WTC11 (cell line): ENCODE measurements at regions of chr2 and their contacts with region 1.

Region 1: DNA sequence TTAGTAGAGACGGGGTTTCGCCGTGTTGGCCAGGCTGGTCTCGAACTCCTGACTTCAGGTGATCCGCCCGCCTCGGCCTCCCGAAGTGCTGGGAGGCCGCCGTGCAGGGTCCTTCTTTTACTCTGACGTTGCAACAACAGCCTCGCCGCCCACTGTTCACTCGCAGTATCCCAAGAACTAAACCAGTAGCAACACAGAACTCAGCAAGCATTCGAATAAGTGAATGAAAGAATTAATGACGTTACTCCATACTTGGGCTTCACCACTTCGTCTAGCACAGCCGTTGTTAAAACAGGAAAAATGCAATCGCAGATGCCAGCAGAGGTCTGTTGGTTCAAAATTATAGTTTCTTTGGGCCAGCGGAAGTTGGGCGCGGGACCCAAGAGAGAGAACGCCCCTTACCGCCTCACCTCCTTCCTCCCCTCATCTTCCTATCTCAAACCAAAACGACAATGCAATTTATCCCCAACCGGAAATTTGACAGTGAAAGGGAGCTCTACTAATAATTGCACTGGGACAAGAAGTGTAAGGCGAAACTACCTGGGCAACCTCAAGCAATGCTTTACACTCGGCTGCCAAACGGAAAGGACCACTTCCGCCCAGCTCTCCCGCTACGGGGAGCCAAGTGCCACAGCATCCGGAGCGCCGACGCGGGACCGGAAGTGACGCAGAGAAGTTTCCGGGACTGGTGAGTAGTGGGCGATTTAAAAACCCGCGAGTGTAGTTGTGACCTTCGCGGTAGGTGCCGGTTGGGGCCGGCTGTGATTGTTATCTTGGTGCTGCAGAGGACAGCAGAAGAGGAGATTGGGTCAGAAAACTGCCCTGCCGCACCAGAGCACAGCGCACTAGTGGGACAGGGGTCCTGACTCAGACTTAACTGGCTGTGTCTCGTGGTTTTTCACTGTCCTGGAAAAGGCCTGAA is at the starts of genes NIF3L1 and PPIL3:
- DNase-seq: peak; percentile 97
- ATAC-seq: peak; percentile 91
- H3K4me3 Mint-ChIP-seq: peak within 1 kb of the TSS; percentile 97
- H3K27ac Mint-ChIP-seq: peak within 1 kb of the TSS; percentile 100
- H3K4me1 Mint-ChIP-seq: peaks cover 20% of the 10 kb centered on the region
- H3K27me3 Mint-ChIP-seq: no peaks in the 10 kb centered on the region
- CTCF ChIP-seq: no peak
- total RNA-seq, gene NIF3L1: 49.1 to 51.2 TPM (median 50.6 TPM) in 3 replicates
- total RNA-seq, gene PPIL3: 39.3 to 51.8 TPM (median 49.9 TPM) in 3 replicates

Region 2: GRCh38 chr2:200864176-200864976 is 24.6 kb before region 1 on chr2 and contains the start of gene CLK1:
- CTCF ChIA-PET with region 1: no interaction called
- POLR2A ChIA-PET with region 1: interaction called, 21 read pairs
- DNase-seq: peak; percentile 88
- ATAC-seq: peak; percentile 72
- H3K4me3 Mint-ChIP-seq: peak within 1 kb of the TSS; percentile 97
- H3K27ac Mint-ChIP-seq: peak within 1 kb of the TSS; percentile 99
- H3K4me1 Mint-ChIP-seq: peaks cover 24% of the 10 kb centered on the region
- H3K27me3 Mint-ChIP-seq: no peaks in the 10 kb centered on the region
- CTCF ChIP-seq: no peak
- total RNA-seq, gene CLK1: 25.5 to 29.5 TPM (median 25.7 TPM) in 3 replicates

Region 3: GRCh38 chr2:200939832-200940231 is 50.9 kb after region 1 on chr2:
- CTCF ChIA-PET with region 1: no interaction called
- POLR2A ChIA-PET with region 1: no interaction called
- DNase-seq: no peak
- ATAC-seq: no peak
- H3K4me3 Mint-ChIP-seq: no peak overlapping the region
- H3K27ac Mint-ChIP-seq: no peak overlapping the region
- H3K4me1 Mint-ChIP-seq: no peaks in the 10 kb centered on the region
- H3K27me3 Mint-ChIP-seq: no peaks in the 10 kb centered on the region
- CTCF ChIP-seq: no peak